ENCODE measurements at regions of chr5 and their contacts with region 1.

Region 1: GRCh38 chr5:96752341-96753016 is 55.3 kb downstream of the ERAP1 start:
- DNase-seq: no peak
- H3K4me3 ChIP-seq: no peak overlapping the region
- H3K27ac ChIP-seq: no peak overlapping the region
- H3K4me1 ChIP-seq: no peaks in the 10 kb centered on the region
- H3K27me3 ChIP-seq: no peaks in the 10 kb centered on the region
- CTCF ChIP-seq: peak; percentile 26 to 47 (median 32)
- POLR2A ChIP-seq: no peak

Region 2: DNA sequence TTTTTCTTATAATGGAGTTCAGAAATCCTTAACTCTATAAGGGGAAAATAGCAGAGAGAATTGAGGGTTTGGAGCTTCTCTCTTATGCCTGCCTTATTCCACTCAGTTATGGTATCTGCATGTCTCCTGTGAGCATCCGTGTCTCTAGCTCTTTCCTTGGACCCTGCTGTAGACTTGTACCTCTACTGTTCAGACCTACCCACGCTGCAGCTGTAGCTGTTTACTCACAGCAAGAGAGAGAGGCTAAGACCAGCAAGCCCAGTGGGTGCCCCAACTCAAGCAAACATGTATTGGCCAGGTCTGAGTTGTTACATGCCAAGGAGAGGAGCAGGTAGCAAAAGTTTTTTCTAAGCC is 312.3 kb before region 1 on chr5:
- intact Hi-C with region 1: no loop called
- DNase-seq: no peak
- H3K4me3 ChIP-seq: no peak overlapping the region
- H3K27ac ChIP-seq: no peak overlapping the region
- H3K4me1 ChIP-seq: no peaks in the 10 kb centered on the region
- H3K27me3 ChIP-seq: no peaks in the 10 kb centered on the region
- CTCF ChIP-seq: no peak
- POLR2A ChIP-seq: no peak

Region 3: DNA sequence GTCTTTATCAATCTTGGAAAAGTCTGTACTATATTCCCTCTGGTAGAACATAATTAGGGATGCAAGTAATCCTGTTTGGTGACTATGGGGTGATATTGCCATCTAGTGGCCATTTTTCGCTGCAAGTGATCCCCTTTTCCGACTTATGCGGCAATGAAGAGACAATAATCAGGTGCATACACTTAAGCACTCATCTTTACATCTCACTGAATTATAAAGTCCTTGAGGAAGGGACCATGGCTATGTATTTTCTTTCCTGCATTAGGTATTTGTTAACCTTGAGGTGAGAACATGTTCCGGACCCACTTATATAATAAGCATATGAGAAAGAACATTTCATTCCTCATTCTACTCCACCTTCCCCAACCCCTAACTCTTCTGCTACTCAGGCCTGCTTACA is 409.6 kb after region 1 on chr5:
- intact Hi-C with region 1: loop called (anchors 10 kb)
- DNase-seq: no peak
- H3K4me3 ChIP-seq: no peak overlapping the region
- H3K27ac ChIP-seq: no peak overlapping the region
- H3K4me1 ChIP-seq: no peaks in the 10 kb centered on the region
- H3K27me3 ChIP-seq: no peaks in the 10 kb centered on the region
- CTCF ChIP-seq: peak; percentile 51 to 78 (median 58)
- POLR2A ChIP-seq: no peak